HEK293T (cell line): ENCODE measurements at regions of chr6 and their contacts with region 1.

Region 1: GRCh38 chr6:90478789-90479602 is 107.9 kb downstream of the MAP3K7 start:
- DNase-seq: peak; percentile 92

Region 2: DNA sequence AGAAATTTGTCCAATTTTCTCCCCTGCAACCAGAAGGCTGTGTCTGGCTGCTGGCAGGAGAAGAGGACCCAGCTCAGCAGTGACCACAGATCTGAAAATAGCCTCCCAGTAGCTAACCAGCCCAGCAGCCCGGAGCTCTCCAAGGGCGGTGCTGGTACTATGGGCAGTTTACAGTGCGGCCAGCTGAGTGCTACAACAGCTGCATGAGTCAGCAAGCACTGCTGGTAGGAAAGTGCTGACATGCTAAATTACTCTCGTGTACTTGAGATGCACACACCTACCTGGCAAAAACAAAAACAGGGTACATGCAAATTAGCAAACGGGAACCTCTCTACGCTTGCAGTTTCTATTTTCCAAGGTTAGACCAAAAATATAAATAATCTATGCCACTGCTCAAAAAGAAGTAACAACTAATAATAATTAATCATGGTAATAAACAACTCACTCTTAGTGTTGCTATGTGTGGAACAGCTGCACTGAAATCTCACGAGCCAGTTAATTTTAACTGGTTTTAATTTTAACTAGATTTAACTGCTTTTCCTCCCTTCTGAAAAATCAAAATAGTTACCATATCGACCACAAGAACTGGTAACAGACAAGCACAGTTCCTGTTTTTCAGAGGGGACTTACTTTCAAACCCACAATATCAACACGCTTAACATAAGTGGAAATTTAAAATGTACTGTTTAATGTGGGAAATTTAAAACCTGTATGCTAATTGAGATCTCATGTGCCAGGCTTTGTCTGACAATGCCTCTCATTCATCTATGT is 193.2 kb before region 1 on chr6:
- CTCF ChIA-PET with region 1: interaction called, 12 read pairs
- POLR2A ChIA-PET with region 1: no interaction called
- DNase-seq: peak; percentile 65